ENCODE measurements at regions of chr14 and their contacts with region 1.

Region 1: DNA sequence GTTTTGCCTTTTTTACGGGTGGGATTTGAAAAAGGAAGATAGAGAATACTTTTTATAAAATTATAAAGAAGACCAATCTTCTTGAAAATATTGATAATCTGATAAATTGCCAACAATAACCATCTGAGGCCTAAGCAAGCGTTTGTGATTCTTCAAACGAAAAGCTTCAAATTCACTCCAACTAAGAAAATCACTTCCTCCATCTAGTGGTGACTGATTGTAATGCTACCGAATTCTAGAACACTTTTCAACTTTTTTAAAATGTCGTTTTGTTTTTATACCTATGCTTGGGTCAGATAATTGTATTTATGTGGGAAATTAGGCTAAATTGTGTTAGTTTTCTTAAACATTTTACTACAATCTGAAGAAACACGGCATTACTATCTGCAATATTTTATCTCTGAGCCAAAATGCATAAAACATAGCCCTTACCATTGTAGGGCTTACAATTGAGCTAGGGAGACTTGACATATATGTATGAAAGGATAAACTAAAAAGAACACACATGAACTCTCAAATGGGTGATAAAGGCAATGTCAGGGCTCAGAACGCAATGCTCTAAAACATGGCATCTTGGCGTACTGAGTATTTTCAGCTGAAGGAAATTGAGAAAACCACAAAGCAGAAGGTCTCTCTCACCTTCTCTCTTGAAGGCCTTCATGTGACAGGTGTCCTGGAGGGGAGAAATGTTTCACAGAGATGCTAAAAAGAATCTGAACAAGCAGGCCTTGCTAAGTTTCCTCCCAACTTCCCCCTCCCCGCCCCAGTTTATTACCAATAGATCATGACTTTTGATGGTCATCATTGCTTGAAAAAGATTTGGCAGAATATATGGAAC is 36.8 kb upstream of the G2E3 start:
- DNase-seq: no peak
- H3K4me3 ChIP-seq: no peak overlapping the region
- H3K27ac ChIP-seq: no peak overlapping the region
- H3K4me1 ChIP-seq: no peaks in the 10 kb centered on the region
- H3K27me3 ChIP-seq: no peaks in the 10 kb centered on the region
- CTCF ChIP-seq: peak; percentile 10 to 62 (median 54)
- POLR2A ChIP-seq: no peak

Region 2: GRCh38 chr14:30375296-30375892 is 146.7 kb before region 1 on chr14:
- intact Hi-C with region 1: loop called (anchors 5 kb)
- DNase-seq: peak; percentile 29
- H3K4me3 ChIP-seq: no peak overlapping the region
- H3K27ac ChIP-seq: no peak overlapping the region
- H3K4me1 ChIP-seq: no peaks in the 10 kb centered on the region
- H3K27me3 ChIP-seq: no peaks in the 10 kb centered on the region
- CTCF ChIP-seq: peak in 3 of 4 experiments; percentile 55 to 63 (median 56)
- POLR2A ChIP-seq: no peak

Measured in prostate gland (tissue), 2 donors.